BJ (cell line): ENCODE measurements at regions of chr3 and their contacts with region 1.

Region 1: DNA sequence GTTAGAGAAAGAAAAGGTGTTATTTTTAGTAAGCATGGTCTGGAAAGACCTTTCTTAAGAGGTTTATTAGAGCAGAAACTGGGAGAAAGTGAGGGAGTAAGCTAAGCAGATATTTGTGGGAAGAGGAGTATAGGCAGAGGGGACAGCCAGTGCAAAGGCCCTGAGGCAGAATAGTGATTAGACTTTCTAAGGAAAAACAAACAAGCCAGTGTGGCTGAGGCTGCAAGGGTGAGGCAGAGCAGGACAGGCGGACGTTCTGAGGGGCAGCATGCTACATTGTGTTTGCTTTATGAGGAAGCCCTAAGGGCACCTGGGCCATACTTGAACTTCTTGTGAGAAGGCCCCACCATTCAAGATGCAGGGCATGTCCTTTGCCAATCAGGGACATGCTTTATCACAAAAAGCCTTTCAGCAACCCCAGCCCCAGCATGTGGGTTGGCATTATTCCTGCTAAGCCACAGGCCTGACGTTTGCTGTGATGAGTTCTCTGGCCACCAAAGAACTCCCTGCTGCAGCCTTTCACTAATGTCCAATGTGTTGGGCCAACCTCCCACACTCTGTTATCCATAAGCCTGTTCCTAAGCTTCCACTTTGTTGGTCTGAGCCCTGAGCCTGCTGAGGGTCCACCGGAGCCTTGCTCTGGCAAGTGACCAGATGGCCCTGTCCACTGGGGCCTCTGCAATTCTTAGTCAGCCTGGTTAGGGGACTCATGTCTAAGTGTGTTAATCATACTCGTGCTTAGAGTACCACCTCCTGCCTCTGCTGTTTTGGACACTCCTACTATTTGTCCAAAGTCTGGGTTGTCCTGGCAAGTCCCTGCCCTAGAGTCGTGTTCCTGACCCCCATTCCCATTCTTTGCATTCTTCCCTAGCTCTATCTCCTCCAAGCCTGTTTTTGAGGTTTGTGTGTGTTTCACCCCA is 209.9 kb upstream of the CTNNB1 start:
- DNase-seq: no peak
- H3K4me3 ChIP-seq: no peak overlapping the region
- H3K27me3 ChIP-seq: peaks cover 2% of the 10 kb centered on the region; the same call in 1 of the 2 replicates
- CTCF ChIP-seq: no peak

Region 2: DNA sequence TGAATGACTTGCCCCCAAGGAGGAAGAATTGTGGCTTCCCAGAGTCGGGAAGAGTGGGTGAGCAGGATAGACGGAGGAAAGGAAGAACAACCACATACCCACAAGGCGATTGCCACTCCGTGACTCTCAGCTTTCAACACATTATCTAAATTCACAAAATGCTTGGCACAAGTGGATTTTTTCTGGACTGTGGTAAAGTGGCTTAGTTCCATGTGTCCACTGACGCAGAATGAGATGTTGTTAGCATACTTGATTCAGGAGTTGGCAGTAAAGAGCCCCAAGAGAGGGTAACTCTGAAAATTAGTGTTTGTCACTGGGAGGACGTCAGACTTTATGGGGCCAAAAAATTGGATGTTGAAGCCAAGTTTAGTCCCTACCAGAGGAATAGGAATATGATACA is 11.1 kb after region 1 on chr3:
- CTCF ChIA-PET with region 1: no interaction called
- POLR2A ChIA-PET with region 1: no interaction called
- DNase-seq: no peak
- H3K4me3 ChIP-seq: no peak overlapping the region
- H3K27me3 ChIP-seq: no peaks in the 10 kb centered on the region; the same call in 1 of the 2 replicates
- CTCF ChIP-seq: no peak

Region 3: DNA sequence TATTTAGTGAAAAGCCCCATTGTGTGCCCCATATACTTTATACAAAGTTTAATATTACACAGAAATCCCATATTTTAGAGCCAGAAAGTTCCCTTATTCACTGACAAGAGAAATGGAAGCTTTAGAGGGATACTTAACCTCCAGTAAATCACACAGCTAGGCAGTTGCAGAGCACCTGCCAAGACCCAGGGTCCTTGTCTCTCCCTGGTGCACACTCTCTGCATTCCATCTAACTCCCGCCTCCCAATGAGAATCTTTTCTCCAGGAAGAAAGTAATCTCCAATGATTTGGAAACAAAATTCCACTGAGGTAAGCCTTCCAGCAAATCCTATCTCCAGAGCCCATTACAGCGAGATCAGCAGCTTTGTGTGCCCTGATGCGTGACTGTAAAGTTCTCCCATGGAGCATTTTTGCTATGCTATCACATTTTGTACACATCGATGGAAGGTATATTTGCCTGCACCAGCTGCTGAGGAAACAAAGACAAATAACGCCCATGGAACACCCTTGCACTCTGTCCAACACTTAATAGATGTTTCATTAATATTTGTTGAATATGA is 931.1 kb after region 1 on chr3:
- CTCF ChIA-PET with region 1: no interaction called
- POLR2A ChIA-PET with region 1: interaction called, 20 read pairs
- DNase-seq: no peak
- H3K4me3 ChIP-seq: no peak overlapping the region
- H3K27me3 ChIP-seq: no peaks in the 10 kb centered on the region
- CTCF ChIP-seq: no peak